A549 (cell line): ENCODE measurements at regions of chr10 and their contacts with region 1.

Region 1: GRCh38 chr10:4849555-4850242 is 23.7 kb downstream of the AKR1E2 start:
- DNase-seq: peak; percentile 80 to 98
- ATAC-seq: peak; percentile 85
- H3K4me3 ChIP-seq: no peak overlapping the region
- H3K27ac ChIP-seq: peak overlapping the region; percentile 91 to 95
- H3K4me1 ChIP-seq: peaks cover 65% of the 10 kb centered on the region
- CTCF ChIP-seq: peak; percentile 100
- EP300 ChIP-seq: no peak
- POLR2A ChIP-seq: no peak
- RAD21 ChIP-seq: peak; percentile 99 to 100

Region 2: GRCh38 chr10:4813023-4813422 is 36.7 kb before region 1 on chr10:
- CTCF ChIA-PET with region 1: interaction called, 77 read pairs
- POLR2A ChIA-PET with region 1: no interaction called
- DNase-seq: peak; percentile 85 to 91
- ATAC-seq: peak; percentile 85 to 95
- H3K4me3 ChIP-seq: no peak overlapping the region
- H3K27ac ChIP-seq: peak overlapping the region; percentile 79 to 83
- H3K4me1 ChIP-seq: peaks cover 54% of the 10 kb centered on the region
- CTCF ChIP-seq: no peak
- EP300 ChIP-seq: peak in 1 of 2 experiments; percentile 55; a peak in 2 of 5 replicates
- POLR2A ChIP-seq: no peak
- RAD21 ChIP-seq: peak in 1 of 2 experiments; percentile 16; a peak in 1 of 5 replicates

Region 3: DNA sequence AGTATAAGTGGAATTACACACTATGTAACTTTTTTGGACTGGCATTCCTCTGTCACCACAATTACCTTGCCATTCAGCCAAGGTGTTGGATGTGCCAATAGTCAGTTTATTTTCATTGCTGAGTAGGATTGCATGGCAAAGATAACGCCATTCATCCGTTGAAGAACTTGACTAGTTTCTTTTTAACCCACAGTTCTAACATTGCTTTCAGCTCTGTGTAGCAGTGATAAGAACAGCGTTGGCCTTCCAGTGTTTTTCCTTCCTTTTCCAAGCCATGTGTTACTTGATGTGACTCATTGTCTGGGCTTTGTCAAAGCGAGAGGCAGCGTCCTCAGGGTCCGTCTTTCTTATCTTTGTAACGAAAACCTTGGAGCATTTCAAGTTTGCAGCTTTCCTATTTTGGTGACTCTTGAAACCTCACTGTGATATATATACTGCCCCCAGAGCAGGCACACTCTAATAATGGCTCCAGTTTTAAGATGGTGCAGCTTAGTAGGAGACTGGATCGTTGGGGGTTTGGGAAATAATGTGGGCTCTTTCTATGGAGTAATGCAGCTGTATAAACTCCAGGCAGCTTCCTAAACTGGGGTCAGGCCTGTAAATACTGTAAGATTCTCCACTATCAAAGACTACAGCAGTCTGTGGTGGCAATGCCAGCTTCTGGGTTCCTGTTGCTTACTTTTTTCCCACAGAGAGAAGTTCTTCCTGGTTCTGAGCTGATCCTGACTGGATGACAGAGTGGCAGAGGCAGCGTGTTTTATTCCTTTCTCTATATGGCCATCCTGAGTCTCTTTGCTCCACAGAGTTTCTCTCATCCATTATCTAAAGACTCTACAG is 18.0 kb after region 1 on chr10:
- CTCF ChIA-PET with region 1: interaction called, 17 read pairs
- POLR2A ChIA-PET with region 1: no interaction called
- DNase-seq: no peak
- ATAC-seq: peak; percentile 20 to 39; a peak in 2 of 6 replicates
- H3K4me3 ChIP-seq: no peak overlapping the region
- H3K27ac ChIP-seq: 0 out of 6 replicates have a peak overlapping the region, but pooled peaks of 1 of the 2 experiments have one; percentile 7
- H3K4me1 ChIP-seq: no peaks in the 10 kb centered on the region
- CTCF ChIP-seq: no peak
- EP300 ChIP-seq: no peak
- POLR2A ChIP-seq: no peak
- RAD21 ChIP-seq: no peak

Region 4: DNA sequence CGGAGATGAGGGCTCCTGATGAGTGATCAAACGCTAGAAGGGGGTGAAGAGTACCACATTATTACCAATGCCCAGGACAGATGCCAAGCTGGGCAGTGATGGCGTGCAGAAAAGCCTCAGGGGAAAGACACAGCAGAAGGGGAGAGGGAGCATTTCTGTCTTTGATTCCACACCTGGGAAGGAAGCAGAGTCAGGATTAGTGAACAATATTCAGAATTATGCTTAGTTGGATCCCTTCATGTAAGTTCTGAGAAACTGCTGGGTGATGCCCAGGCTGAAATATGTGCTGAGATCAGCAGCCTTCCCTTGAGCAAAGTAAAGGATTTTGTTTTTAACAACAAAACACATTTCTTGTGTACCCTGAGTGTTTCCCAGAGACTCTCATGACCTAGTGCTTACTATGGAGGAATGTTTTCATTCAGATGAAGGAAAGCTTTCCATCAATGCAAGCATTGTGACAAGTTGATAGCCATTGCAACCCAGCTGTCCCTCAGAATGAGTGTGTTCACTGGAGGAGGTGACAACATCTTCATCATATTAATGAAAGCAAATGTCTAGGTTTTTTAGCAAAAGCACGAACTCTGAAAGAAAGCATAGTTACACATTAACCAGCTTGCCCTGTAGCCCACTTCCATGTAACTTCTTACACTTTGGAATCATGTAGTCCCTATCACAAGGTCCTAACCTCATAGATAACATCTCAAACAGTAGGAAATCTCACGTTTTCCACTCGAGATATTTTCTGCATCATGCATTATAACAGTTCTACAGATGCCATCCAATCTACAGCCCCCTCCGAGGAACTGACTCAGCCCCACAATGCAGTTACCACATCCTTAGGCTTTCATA is 89.7 kb after region 1 on chr10:
- CTCF ChIA-PET with region 1: interaction called, 18 read pairs
- POLR2A ChIA-PET with region 1: no interaction called
- DNase-seq: peak in 1 of 2 experiments; percentile 62
- ATAC-seq: peak; percentile 73 to 83
- H3K4me3 ChIP-seq: no peak overlapping the region
- H3K27ac ChIP-seq: peak overlapping the region; percentile 89 to 91
- H3K4me1 ChIP-seq: peaks cover 57% of the 10 kb centered on the region
- CTCF ChIP-seq: no peak
- EP300 ChIP-seq: no peak; a peak in 1 of 5 replicates
- POLR2A ChIP-seq: no peak
- RAD21 ChIP-seq: no peak

Region 5: DNA sequence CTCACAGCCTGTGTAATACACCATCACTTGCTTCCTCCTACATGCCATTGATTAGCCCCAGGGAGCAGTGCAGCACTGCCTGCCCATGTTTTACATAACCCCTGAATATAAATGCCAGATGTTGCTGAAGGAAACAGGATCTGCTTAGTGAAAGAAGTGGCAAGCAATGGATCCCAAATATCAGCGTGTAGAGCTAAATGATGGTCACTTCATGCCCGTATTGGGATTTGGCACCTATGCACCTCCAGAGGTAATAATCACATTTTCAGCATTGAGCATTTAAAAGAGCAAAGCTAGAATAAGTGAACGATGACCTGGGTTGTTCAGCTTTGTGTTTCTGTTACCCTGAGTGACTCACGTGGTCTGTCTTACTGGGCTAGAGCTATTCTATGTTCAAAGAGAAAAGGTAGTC is 347.0 kb after region 1 on chr10 and contains the start of gene AKR1C4:
- CTCF ChIA-PET with region 1: interaction called, 10 read pairs
- POLR2A ChIA-PET with region 1: no interaction called
- DNase-seq: peak in 1 of 2 experiments; percentile 48
- ATAC-seq: peak; percentile 39 to 56; a peak in 3 of 6 replicates
- H3K4me3 ChIP-seq: no peak within 1 kb of the TSS
- H3K27ac ChIP-seq: peak within 1 kb of the TSS; percentile 86 to 89
- H3K4me1 ChIP-seq: peaks cover 24% of the 10 kb centered on the region
- CTCF ChIP-seq: no peak
- EP300 ChIP-seq: no peak
- POLR2A ChIP-seq: no peak
- RAD21 ChIP-seq: no peak
- polyA plus RNA-seq, gene AKR1C4: 1.1 and 1.2 TPM in 2 replicates

Region 6: DNA sequence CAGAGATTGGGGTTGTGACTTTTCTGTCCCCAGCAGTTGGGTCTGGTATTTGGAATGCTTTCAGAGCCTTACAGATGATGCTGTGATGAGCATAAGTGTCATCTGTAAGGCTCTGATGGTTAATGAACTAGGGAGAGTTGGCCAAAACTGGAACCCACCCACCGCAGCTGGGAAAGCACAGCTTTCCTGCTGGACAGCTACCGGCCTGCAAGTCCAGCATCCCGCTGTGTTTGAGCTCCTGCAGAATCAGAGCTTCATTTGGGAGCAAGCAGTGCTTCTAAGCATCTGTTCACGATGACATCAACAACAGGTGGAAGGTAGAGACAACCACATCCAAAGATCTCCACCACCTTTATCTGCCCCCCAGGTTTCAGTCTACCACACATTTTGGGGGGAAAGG is 526.8 kb after region 1 on chr10:
- CTCF ChIA-PET with region 1: interaction called, 13 read pairs
- POLR2A ChIA-PET with region 1: no interaction called
- DNase-seq: no peak
- ATAC-seq: no peak; a peak in 1 of 6 replicates
- H3K4me3 ChIP-seq: no peak overlapping the region
- H3K27ac ChIP-seq: no peak overlapping the region
- H3K4me1 ChIP-seq: no peaks in the 10 kb centered on the region
- CTCF ChIP-seq: no peak
- EP300 ChIP-seq: no peak
- POLR2A ChIP-seq: no peak
- RAD21 ChIP-seq: no peak

Region 7: GRCh38 chr10:5423771-5424170 is 574.1 kb after region 1 on chr10:
- CTCF ChIA-PET with region 1: interaction called, 10 read pairs
- POLR2A ChIA-PET with region 1: interaction called, 3 read pairs
- DNase-seq: no peak
- ATAC-seq: no peak
- H3K4me3 ChIP-seq: no peak overlapping the region
- H3K27ac ChIP-seq: no peak overlapping the region
- H3K4me1 ChIP-seq: peaks cover 20% of the 10 kb centered on the region
- CTCF ChIP-seq: no peak
- EP300 ChIP-seq: no peak
- POLR2A ChIP-seq: no peak
- RAD21 ChIP-seq: no peak